Activated CD4-positive, alpha-beta T cell treated with anti-CD3 and anti-CD28 coated beads, Interleukin-2, amount 10 ng/mL, durations not matched to agents 7 days and 5 days (primary cell): ENCODE measurements at regions of chr4 and their contacts with region 1.

Region 1: GRCh38 chr4:151163855-151164254 is 64.4 kb downstream of the RPS3A start:
- DNase-seq: no peak
- H3K4me3 Mint-ChIP-seq: no peak overlapping the region
- H3K27ac Mint-ChIP-seq: no peak overlapping the region
- H3K4me1 Mint-ChIP-seq: no peaks in the 10 kb centered on the region
- H3K27me3 Mint-ChIP-seq: peaks cover 9% of the 10 kb centered on the region

Region 2: DNA sequence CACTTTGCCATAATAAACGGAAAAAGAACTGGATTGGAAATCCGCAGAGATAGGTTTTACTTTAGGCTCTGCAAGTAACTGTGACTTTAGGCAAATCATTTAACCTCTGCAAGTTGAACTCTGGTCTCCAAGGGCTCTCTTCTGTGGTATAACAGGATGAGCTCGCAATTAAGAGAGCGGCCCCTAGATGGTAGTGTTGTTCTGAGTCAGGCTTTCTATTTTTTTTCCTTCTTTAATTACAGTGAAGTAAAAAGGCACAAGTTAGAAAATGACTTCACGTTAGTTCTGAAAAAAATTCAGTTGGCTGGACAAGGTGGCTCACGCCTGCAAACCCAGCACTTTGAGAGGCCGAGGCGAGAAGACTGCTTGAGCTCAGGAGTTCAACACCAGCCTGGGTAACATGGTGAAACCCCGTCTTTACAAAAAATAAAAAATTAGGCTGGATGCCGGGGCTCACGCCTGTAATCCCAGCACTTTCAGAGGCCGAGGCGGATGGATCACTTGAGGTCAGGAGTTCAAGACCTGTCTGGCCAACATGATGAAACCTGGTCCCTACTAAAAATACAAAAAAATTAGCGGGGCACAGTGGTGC is 46.4 kb before region 1 on chr4:
- CTCF ChIA-PET with region 1: no interaction called
- POLR2A ChIA-PET with region 1: no interaction called
- DNase-seq: peak; percentile 66
- H3K4me3 Mint-ChIP-seq: no peak overlapping the region
- H3K27ac Mint-ChIP-seq: no peak overlapping the region
- H3K4me1 Mint-ChIP-seq: peaks cover 5% of the 10 kb centered on the region
- H3K27me3 Mint-ChIP-seq: no peaks in the 10 kb centered on the region

Region 3: GRCh38 chr4:151147000-151147399 is 16.9 kb before region 1 on chr4:
- CTCF ChIA-PET with region 1: no interaction called
- POLR2A ChIA-PET with region 1: interaction called, 11 read pairs
- DNase-seq: no peak
- H3K4me3 Mint-ChIP-seq: no peak overlapping the region
- H3K27ac Mint-ChIP-seq: no peak overlapping the region
- H3K4me1 Mint-ChIP-seq: no peaks in the 10 kb centered on the region
- H3K27me3 Mint-ChIP-seq: peaks cover 4% of the 10 kb centered on the region

Region 4: GRCh38 chr4:151260526-151260925 is 96.7 kb after region 1 on chr4:
- CTCF ChIA-PET with region 1: no interaction called
- POLR2A ChIA-PET with region 1: no interaction called
- DNase-seq: no peak
- H3K4me3 Mint-ChIP-seq: no peak overlapping the region
- H3K27ac Mint-ChIP-seq: no peak overlapping the region
- H3K4me1 Mint-ChIP-seq: no peaks in the 10 kb centered on the region
- H3K27me3 Mint-ChIP-seq: peaks cover 2% of the 10 kb centered on the region